Sigmoid colon (tissue), 7 donors: ENCODE measurements at regions of chr10 and their contacts with region 1.

Region 1: DNA sequence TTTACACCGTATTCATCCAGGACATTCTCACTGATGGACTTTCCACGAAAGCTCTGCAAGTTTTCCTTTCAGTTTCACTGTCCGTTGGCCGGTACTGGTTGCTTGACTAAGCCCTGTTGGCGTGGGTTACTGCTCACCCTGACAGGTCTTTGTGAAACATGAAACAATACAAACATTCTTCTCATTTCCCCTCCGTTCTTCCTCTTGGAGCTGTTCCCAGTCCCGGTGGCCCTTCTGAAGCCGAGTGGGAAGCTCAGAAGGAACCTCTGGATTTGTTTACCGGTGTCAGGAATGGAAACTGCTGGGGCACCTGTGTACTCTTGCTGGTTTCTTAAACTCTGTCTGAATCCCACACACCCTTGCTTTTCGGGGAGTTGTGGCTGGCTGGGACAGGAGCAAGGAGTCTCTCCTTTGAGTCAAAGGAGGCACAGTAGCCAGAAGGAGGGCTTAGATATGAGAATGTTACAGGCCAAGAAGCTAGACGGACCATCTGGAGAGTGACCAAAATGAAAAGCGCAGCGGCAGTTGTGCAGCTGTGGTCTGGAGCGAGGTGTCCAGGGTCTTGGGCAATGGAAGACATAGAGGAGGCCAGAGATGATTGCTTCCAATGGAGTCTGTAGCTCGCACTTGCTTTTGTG is 45.7 kb downstream of the LYZL2 start:
- DNase-seq: peak; percentile 86
- H3K4me3 ChIP-seq: peak overlapping the region; percentile 18 to 41 (median 36)
- H3K27ac ChIP-seq: peak overlapping the region; percentile 72 to 84 (median 76)
- H3K4me1 ChIP-seq: peaks cover 0 to 15% (median 10%) of the 10 kb centered on the region in 4 donors
- H3K27me3 ChIP-seq: no peaks in the 10 kb centered on the region
- CTCF ChIP-seq: no peak
- EP300 ChIP-seq: no peak
- POLR2A ChIP-seq: no peak

Region 2: DNA sequence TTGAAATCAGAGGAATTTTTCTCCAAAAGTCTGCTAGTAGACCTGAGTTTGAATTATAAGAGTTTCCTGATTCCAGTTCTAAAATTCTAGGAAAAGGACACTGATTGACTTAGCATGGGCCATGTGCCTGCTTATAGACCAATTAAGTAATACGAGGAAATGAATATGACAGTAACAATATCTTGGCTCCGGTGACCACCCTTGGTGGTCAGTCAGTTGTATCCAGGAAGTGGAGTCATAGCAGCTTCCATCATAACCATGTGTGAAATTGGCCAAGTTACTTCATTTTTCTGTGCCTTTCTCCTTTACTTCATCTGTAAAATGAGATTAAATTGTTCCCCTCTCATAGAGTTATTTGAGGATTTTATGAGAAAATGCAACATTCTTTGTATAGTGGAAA is 301.7 kb before region 1 on chr10:
- intact Hi-C with region 1: no loop called
- DNase-seq: no peak
- H3K4me3 ChIP-seq: no peak overlapping the region
- H3K27ac ChIP-seq: no peak overlapping the region
- H3K4me1 ChIP-seq: no peaks in the 10 kb centered on the region
- H3K27me3 ChIP-seq: no peaks in the 10 kb centered on the region
- CTCF ChIP-seq: no peak
- EP300 ChIP-seq: no peak
- POLR2A ChIP-seq: no peak

Region 3: GRCh38 chr10:30413996-30414576 is 169.8 kb before region 1 on chr10:
- intact Hi-C with region 1: loop called (anchors 5 kb)
- DNase-seq: no peak
- H3K4me3 ChIP-seq: no peak overlapping the region
- H3K27ac ChIP-seq: no peak overlapping the region
- H3K4me1 ChIP-seq: no peaks in the 10 kb centered on the region
- H3K27me3 ChIP-seq: no peaks in the 10 kb centered on the region
- CTCF ChIP-seq: peak; percentile 66 to 85 (median 76)
- EP300 ChIP-seq: no peak
- POLR2A ChIP-seq: no peak

Region 4: DNA sequence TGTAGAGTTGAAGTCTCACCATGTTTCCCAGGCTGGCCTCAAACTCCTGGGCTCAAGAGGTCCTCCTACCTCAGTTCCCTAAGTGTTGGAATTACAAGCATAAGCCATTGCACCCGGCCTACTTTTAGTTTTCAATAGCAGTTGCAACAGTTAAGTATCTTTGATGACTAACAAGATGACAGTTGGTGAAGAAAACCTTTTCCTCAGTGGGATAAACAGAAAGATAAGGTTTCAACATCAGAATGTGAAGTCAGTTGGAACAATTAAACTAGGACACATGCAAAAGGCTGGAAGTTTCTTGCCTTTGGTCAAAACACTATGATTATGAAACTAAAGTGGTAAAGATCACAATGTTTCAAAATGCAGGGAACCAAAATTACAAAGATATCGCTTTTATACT is 278.6 kb after region 1 on chr10:
- intact Hi-C with region 1: no loop called
- DNase-seq: no peak
- H3K4me3 ChIP-seq: no peak overlapping the region
- H3K27ac ChIP-seq: peak overlapping the region; percentile 42 to 60 (median 52)
- H3K4me1 ChIP-seq: peaks cover 0 to 43% (median 13%) of the 10 kb centered on the region in 4 donors
- H3K27me3 ChIP-seq: no peaks in the 10 kb centered on the region
- CTCF ChIP-seq: no peak
- EP300 ChIP-seq: no peak
- POLR2A ChIP-seq: no peak